ENCODE measurements at regions of chr15 and their contacts with region 1.

Region 1: GRCh38 chr15:38252481-38253412 is at the start of gene SPRED1:
- DNase-seq: no peak
- H3K4me3 Mint-ChIP-seq: peak within 1 kb of the TSS; percentile 79
- H3K27ac Mint-ChIP-seq: peak within 1 kb of the TSS; percentile 69
- H3K4me1 Mint-ChIP-seq: peaks cover 27% of the 10 kb centered on the region
- H3K27me3 Mint-ChIP-seq: peaks cover 68% of the 10 kb centered on the region
- total RNA-seq, gene SPRED1: 0.49 and 0.54 TPM in 2 replicates

Region 2: DNA sequence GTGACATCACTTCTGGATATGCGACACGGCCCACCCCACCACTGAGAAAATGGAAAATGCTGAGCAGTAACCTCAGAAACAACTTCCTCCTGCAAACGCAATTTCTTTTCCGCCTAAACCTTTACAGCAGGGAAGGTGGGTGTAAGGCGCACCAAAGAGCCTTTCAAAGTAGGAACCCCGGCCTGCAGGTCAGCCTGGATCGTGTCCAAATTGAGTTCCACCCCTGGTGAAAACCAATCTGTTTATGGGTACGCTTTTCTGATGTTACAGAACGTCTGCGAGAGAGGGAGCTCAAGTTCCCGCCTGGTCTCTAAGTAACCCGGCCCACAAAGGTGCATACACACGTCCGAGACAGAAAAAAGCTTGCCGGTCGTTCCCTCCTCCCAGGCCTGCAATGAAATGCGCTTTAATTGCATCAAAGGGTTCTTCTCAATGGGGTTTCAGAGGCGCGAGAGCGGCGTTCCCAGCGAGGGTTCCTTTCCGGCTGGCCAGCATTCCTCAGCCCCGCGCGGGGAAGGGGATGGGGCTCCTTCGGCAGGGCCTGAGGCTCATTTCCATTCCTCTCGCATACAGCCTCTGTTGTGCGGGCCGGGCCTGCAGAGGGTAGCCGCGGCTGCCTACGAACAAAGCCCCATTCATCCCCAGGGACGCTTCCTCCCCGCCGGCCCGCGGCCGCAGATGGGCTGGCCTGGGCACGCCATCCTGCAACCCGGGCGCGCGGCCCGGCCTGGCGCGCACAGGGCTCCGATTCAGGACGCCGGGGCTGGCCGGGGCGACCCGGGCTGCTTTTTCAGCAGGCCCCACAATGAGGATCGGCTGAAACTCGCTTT is 180.2 kb before region 1 on chr15:
- intact Hi-C with region 1: loop called (anchors 5 kb)
- DNase-seq: peak; percentile 6
- H3K4me3 Mint-ChIP-seq: peak overlapping the region; percentile 68
- H3K27ac Mint-ChIP-seq: no peak overlapping the region
- H3K4me1 Mint-ChIP-seq: peaks cover 44% of the 10 kb centered on the region
- H3K27me3 Mint-ChIP-seq: peaks cover 49% of the 10 kb centered on the region

Region 3: GRCh38 chr15:38354315-38354929 is 101.7 kb after region 1 on chr15:
- intact Hi-C with region 1: no loop called
- DNase-seq: peak; percentile 7
- H3K4me3 Mint-ChIP-seq: no peak overlapping the region
- H3K27ac Mint-ChIP-seq: no peak overlapping the region
- H3K4me1 Mint-ChIP-seq: no peaks in the 10 kb centered on the region
- H3K27me3 Mint-ChIP-seq: peaks cover 14% of the 10 kb centered on the region